Colonic mucosa (tissue), 4 donors: ENCODE measurements at regions of chrX and their contacts with region 1.

Region 1: DNA sequence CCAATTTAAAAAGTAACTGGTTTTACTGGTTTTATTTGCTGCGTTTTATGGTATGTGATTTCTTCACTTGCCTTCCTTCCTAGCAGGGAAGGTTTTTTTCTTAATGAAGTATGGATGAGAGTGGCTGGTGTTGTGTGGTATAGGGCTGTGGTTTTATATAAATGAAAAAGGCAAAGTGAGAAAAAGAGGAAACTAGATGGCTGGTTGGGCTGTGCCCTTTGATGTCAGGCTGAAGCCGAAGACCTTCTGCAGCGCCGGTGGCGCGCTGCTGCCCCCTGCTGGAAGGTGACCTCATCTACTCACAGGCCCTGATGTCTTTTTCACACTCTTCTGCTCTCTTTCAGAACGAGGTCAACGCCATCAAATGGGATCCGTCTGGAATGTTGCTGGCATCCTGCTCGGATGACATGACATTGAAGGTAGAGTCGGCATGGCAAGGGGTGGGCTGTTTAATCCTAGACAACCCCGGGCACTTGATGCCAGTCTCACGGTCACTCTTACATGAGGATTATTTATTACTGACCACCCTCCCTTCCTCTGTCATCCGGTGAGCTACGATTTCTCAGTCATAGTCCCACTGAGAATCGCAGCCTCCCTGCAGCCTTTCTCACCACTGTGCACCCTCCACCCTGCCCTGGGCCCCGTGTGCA is 56.6 kb downstream of the GPR143 start:
- DNase-seq: peak; percentile 78
- H3K4me3 ChIP-seq: no peak overlapping the region
- H3K27ac ChIP-seq: no peak overlapping the region
- H3K4me1 ChIP-seq: no peaks in the 10 kb centered on the region
- H3K27me3 ChIP-seq: no peaks in the 10 kb centered on the region
- CTCF ChIP-seq: peak; percentile 90

Region 2: DNA sequence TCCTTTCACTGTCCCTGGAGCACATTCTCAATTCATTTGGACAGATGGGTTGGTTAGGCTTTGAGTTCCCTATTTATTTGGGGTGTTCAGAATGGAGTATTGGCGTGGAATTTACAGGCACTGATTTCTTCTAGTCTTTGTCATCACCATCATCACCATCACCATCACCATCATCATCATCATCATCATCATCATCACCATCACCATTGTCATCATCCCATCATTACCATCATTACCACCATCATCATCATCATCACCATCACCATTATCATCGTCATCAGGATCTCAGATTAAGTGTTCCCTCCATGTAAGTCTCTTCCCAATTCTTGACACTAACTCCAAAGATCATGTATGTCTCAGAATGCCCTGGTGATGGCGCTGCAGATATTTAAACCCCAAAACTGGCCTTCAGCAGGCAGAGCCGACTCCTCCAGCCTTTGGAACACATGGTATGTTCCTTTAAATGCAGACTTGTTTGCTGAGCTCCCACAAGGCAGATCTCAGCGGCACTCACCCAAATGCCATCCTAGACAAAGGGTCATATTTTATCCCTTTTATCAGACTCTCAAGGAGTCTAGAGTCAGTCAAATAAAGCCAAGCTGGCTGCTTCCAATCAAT is 888.0 kb before region 1 on chrX:
- intact Hi-C with region 1: loop called (anchors 5 kb)
- DNase-seq: no peak
- H3K4me3 ChIP-seq: no peak overlapping the region
- H3K27ac ChIP-seq: no peak overlapping the region
- H3K4me1 ChIP-seq: no peaks in the 10 kb centered on the region
- H3K27me3 ChIP-seq: no peaks in the 10 kb centered on the region
- CTCF ChIP-seq: no peak

Region 3: GRCh38 chrX:8969378-8969777 is 739.7 kb before region 1 on chrX:
- intact Hi-C with region 1: loop called (anchors 5 kb)
- DNase-seq: no peak
- H3K4me3 ChIP-seq: no peak overlapping the region
- H3K27ac ChIP-seq: no peak overlapping the region
- H3K4me1 ChIP-seq: no peaks in the 10 kb centered on the region
- H3K27me3 ChIP-seq: no peaks in the 10 kb centered on the region
- CTCF ChIP-seq: no peak

Region 4: DNA sequence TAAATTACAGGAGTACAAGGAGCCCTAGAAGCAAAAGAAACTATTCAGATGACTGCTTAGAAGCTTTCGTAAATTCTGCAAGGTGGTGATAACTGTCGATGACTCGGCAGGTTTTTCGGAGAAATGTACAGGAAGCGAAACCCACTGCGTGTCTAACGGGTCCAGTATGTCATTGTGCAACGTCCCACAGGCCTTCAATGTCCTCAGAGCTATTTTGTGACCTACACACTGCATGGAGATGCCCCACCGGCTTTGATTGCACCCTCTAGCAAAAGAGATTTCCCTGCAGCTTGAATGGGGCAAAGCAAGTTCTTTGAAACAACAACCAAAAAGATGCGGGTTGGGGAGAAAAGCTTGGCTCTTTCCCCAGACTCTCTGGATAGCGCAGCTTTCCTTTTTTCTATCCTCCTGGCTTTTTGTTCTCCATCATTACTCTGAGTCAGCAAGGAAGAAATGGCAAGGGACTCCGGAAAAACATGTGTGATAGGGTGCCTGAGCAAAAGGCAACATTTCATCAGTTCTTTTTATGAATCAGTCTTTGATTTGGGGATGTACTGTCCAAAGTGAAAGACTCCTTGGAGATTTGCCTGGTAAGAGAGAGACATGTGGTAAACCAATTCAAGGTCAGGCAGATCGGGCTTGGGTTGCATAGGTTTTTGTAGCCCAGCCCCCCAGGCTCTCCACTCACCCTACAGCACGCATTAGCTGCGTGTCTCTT is 356.2 kb before region 1 on chrX:
- intact Hi-C with region 1: loop called (anchors 10 kb)
- DNase-seq: peak; percentile 34
- H3K4me3 ChIP-seq: no peak overlapping the region
- H3K27ac ChIP-seq: peak overlapping the region; percentile 29
- H3K4me1 ChIP-seq: no peaks in the 10 kb centered on the region
- H3K27me3 ChIP-seq: no peaks in the 10 kb centered on the region
- CTCF ChIP-seq: no peak

Region 5: GRCh38 chrX:9586992-9587392 is 122.0 kb before region 1 on chrX:
- intact Hi-C with region 1: no loop called
- DNase-seq: no peak
- H3K4me3 ChIP-seq: no peak overlapping the region
- H3K27ac ChIP-seq: no peak overlapping the region
- H3K4me1 ChIP-seq: no peaks in the 10 kb centered on the region
- H3K27me3 ChIP-seq: no peaks in the 10 kb centered on the region
- CTCF ChIP-seq: no peak

Region 6: DNA sequence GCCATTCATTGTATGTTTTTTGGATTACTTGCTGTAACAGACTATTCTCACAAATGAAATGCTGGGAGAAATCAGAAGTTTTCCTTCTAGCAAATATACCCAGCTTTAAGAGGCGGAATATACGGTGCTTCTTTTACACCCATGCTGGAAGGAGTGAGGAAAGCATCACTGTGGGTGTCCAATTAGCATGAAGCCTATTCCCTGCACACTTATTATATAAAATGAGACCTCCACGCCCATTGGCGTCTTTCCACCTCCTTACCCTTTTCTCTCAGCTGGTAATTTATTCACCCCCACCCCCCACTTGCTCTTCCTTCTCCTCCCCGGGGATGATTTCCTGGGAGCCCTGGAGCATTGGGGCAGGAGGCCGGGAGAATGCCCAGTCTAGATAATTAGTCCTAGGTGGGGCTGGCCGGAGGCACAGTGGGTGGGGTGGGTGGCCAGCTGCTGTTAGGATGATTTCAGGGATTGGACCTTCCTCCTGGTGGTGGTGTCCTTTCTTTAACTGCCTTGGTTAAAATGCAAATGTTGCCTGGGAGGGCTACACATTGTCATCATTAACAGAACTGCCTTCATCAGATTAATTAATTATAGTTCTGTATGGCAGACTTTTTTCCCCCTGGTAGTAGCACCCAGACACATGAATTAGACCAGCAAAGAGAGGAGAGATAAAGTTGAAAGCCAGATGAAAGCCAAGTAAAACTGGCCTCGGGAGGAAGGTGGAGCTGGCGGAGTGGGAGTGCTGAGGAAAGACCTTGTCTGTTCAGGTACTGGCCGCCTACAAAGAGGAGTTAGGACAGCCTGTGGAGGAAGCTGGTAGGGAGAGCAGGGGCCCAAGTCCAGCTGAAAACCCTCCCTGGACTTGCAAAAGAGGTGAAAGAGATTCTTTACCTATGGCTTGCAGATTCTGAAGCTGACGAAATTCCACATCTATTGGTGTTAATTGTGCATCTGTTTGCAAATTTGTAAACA is 88.6 kb after region 1 on chrX:
- intact Hi-C with region 1: no loop called
- DNase-seq: no peak
- H3K4me3 ChIP-seq: no peak overlapping the region
- H3K27ac ChIP-seq: no peak overlapping the region
- H3K4me1 ChIP-seq: no peaks in the 10 kb centered on the region
- H3K27me3 ChIP-seq: no peaks in the 10 kb centered on the region
- CTCF ChIP-seq: no peak

Region 7: DNA sequence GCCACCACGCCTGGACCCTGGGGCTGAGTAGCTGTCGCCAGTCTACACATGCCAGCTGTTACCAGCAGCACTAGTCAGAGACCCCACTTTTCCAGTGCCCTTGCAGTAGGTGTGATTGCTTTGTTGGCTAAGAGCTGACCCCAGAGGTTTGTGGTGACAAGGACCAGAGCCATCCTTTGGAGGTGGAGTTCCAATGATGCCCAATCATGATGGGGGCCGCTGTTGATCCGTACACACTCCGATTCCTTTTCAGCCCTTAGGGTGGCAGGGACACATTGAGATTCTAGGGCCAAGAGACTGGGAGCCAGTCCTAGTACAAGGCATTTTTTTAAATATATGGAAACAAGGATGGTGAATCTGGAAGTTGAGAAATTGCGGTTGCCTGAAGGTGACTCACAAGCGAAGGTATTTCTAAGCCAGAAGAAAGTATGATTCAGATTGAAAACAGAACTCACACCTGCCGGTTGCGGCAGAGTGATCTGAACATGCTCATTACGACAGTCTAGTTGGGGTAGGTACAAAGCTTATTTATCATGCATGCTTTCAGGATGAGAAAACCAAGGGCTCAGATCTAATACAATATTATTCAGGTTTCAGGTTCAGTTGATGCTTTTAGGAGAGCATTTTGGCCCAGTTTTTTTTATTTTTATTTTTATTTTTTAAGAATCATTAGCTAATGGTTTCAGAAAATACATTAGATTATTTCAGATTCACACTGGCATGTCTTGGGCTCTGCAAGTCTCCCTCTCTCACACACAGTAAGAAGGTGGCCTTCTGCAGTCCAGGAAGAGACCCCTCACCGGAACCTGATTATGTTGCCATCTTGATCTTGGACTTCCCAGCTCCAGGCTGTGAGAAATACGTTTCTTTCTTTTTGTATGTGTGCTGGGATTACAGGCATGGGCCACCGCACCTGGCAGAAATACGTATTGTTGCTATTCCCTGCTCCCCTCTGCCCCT is 120.6 kb after region 1 on chrX:
- intact Hi-C with region 1: no loop called
- DNase-seq: no peak
- H3K4me3 ChIP-seq: no peak overlapping the region
- H3K27ac ChIP-seq: no peak overlapping the region
- H3K4me1 ChIP-seq: no peaks in the 10 kb centered on the region
- H3K27me3 ChIP-seq: no peaks in the 10 kb centered on the region
- CTCF ChIP-seq: no peak